Colonic mucosa (tissue), 4 donors: ENCODE measurements at regions of chr16 and their contacts with region 1.

Region 1: GRCh38 chr16:72124761-72125634 is 31.4 kb downstream of the DHX38 start:
- DNase-seq: peak; percentile 76
- H3K4me3 ChIP-seq: no peak overlapping the region
- H3K27ac ChIP-seq: no peak overlapping the region
- H3K4me1 ChIP-seq: no peaks in the 10 kb centered on the region
- H3K27me3 ChIP-seq: no peaks in the 10 kb centered on the region
- CTCF ChIP-seq: peak; percentile 63

Region 2: DNA sequence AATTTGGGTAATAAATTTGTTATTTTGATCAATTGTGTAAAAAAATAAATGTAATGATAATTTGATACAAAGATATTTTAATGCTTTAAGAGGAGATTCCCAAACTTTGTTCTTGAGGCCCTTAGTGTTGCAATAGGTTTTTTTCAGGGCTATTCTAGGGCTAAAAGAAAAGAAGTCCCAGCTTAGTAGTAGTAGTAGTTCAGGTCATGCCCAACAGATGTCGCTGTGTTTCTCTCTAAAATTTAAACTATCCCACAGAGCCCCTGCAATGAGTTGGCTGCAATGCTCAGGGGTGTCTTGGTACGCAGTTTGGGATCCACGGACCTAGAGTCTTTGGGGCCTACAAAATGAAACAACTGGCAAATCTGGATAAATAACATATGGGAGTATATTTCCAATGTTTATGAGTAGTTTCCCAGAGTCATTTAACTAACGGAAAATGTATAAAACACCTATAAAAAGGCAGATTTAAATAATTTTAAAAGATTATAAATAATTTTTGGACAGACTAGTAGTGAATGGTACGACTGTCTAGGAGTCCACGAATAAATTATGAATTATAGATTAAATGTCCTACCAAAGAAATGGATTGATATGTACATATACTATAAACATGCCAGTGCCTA is 275.4 kb after region 1 on chr16:
- intact Hi-C with region 1: loop called (anchors 10 kb)
- DNase-seq: peak; percentile 34
- H3K4me3 ChIP-seq: no peak overlapping the region
- H3K27ac ChIP-seq: no peak overlapping the region
- H3K4me1 ChIP-seq: no peaks in the 10 kb centered on the region
- H3K27me3 ChIP-seq: no peaks in the 10 kb centered on the region
- CTCF ChIP-seq: peak; percentile 81